ENCODE measurements at regions of chr3 and their contacts with region 1.

Region 1: GRCh38 chr3:33980252-33980651 is 181.8 kb downstream of the PDCD6IP start:
- DNase-seq: no peak
- H3K4me3 ChIP-seq: no peak overlapping the region
- H3K27ac ChIP-seq: no peak overlapping the region
- H3K4me1 ChIP-seq: no peaks in the 10 kb centered on the region
- H3K27me3 ChIP-seq: no peaks in the 10 kb centered on the region
- CTCF ChIP-seq: peak; percentile 56

Region 2: DNA sequence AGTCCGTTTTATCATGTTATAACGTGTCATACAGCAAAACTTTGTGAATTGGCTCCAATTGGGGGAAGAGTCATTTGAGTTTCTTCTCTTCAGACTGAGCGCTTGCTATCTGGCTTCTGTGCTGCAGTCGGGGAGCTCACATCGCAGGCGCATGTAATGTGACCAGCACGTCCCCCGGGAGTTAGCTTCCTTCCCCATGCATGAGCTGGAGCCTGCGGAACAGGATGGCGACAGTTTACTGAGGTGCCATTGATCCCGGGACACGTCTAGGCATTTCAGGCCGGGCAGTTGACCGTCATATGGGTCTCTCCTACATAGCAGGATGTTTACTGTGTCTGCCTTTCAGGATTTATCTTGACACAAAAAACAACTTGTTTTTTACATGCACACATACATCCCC is 1696.9 kb before region 1 on chr3:
- CTCF ChIA-PET with region 1: no interaction called
- POLR2A ChIA-PET with region 1: no interaction called
- intact Hi-C with region 1: no loop called
- DNase-seq: no peak
- H3K4me3 ChIP-seq: no peak overlapping the region
- H3K27ac ChIP-seq: no peak overlapping the region
- H3K4me1 ChIP-seq: peaks cover 14% of the 10 kb centered on the region
- H3K27me3 ChIP-seq: no peaks in the 10 kb centered on the region
- CTCF ChIP-seq: no peak

Region 3: DNA sequence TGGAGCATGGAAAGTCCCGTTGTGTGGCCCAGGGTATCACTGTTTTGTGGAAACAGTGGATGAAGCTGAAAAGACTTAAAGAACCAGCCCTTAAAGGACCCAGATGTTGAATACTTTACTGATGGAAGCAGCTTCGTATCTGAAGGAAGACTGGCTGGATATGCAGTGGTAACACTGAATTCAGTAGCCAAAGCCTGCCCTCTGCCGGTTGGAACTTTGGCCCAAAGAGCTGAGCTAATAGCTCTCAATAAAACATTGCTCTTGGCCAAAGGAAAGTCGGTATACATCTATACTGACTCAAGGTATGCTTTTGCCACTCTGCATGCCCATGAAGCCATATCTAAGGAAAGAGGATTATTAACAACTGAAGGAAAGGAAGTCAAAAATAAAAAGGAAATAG is 703.6 kb after region 1 on chr3:
- CTCF ChIA-PET with region 1: interaction called, 5 read pairs
- POLR2A ChIA-PET with region 1: no interaction called
- intact Hi-C with region 1: loop called (anchors 2 kb)
- DNase-seq: peak in 1 of 2 experiments; percentile 36
- H3K4me3 ChIP-seq: no peak overlapping the region
- H3K27ac ChIP-seq: no peak overlapping the region
- H3K4me1 ChIP-seq: no peaks in the 10 kb centered on the region
- H3K27me3 ChIP-seq: no peaks in the 10 kb centered on the region
- CTCF ChIP-seq: peak; percentile 56

Region 4: GRCh38 chr3:35908366-35909232 is 1928.3 kb after region 1 on chr3:
- CTCF ChIA-PET with region 1: no interaction called
- POLR2A ChIA-PET with region 1: no interaction called
- intact Hi-C with region 1: loop called (anchors 10 kb)
- DNase-seq: peak in 1 of 2 experiments; percentile 29
- H3K4me3 ChIP-seq: no peak overlapping the region
- H3K27ac ChIP-seq: no peak overlapping the region
- H3K4me1 ChIP-seq: no peaks in the 10 kb centered on the region
- H3K27me3 ChIP-seq: no peaks in the 10 kb centered on the region
- CTCF ChIP-seq: peak; percentile 80